CD14-positive monocyte (primary cell): ENCODE measurements at regions of chr12 and their contacts with region 1.

Region 1: GRCh38 chr12:11649703-11650521 is 438 bp downstream of the ETV6 start:
- DNase-seq: peak in 2 of 3 donors; percentile 37 to 45
- H3K4me3 ChIP-seq: peak overlapping the region; percentile 96 to 100 (median 96)
- H3K4me3 Mint-ChIP-seq: peak overlapping the region; percentile 95 to 98
- H3K27ac ChIP-seq: peak overlapping the region; percentile 96 to 97
- H3K27ac Mint-ChIP-seq: peak overlapping the region; percentile 95 to 99 (median 98)
- H3K4me1 ChIP-seq: peaks cover 38 to 45% of the 10 kb centered on the region in 2 donors
- H3K4me1 Mint-ChIP-seq: peaks cover 32% of the 10 kb centered on the region
- H3K27me3 ChIP-seq: no peaks in the 10 kb centered on the region
- H3K27me3 Mint-ChIP-seq: peaks cover 0 to 1% (median 0%) of the 10 kb centered on the region in 3 donors
- CTCF ChIP-seq: no peak

Region 2: GRCh38 chr12:11684393-11684792 is 34.5 kb after region 1 on chr12:
- intact Hi-C with region 1: loop called (anchors 2 to 5 kb)
- DNase-seq: peak; percentile 56 to 79 (median 78)
- H3K4me3 ChIP-seq: peak overlapping the region in 1 of 3 experiments; percentile 50
- H3K4me3 Mint-ChIP-seq: no peak overlapping the region
- H3K27ac ChIP-seq: peak overlapping the region; percentile 88 to 93
- H3K27ac Mint-ChIP-seq: peak overlapping the region; percentile 87 to 97 (median 95)
- H3K4me1 ChIP-seq: peaks cover 53 to 60% of the 10 kb centered on the region in 2 donors
- H3K4me1 Mint-ChIP-seq: peaks cover 85% of the 10 kb centered on the region
- H3K27me3 ChIP-seq: no peaks in the 10 kb centered on the region
- H3K27me3 Mint-ChIP-seq: peaks cover 0 to 2% (median 0%) of the 10 kb centered on the region in 3 donors
- CTCF ChIP-seq: no peak

Region 3: GRCh38 chr12:11707535-11707934 is 57.6 kb after region 1 on chr12:
- intact Hi-C with region 1: no loop called
- DNase-seq: no peak
- H3K4me3 ChIP-seq: no peak overlapping the region
- H3K4me3 Mint-ChIP-seq: no peak overlapping the region
- H3K27ac ChIP-seq: peak overlapping the region in 1 of 2 donors; percentile 67
- H3K27ac Mint-ChIP-seq: peak overlapping the region in 2 of 7 donors; percentile 48 to 77
- H3K4me1 ChIP-seq: peaks cover 42 to 43% of the 10 kb centered on the region in 2 donors
- H3K4me1 Mint-ChIP-seq: peaks cover 64% of the 10 kb centered on the region
- H3K27me3 ChIP-seq: no peaks in the 10 kb centered on the region
- H3K27me3 Mint-ChIP-seq: peaks cover 0 to 1% (median 0%) of the 10 kb centered on the region in 3 donors
- CTCF ChIP-seq: no peak

Region 4: DNA sequence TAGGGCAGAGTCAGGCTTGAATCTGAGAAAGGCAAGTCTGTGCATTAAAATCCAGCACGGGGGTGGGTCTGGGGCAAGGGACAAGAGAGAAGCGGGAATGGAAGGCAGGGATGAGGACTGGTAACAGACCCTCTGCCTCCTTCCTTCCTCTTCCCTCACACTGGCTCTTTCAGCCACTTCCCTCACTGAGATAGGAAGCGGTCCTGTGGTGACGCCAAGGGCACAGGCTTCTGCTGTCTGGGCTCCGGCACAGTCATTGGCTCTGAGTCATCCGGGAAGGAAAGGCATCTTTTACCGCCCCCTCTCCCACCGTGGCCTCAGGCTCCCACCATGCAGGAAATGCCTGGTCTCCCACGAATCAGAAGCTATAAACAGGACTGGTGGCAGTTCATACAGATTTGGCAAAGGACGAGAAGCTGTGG is 69.8 kb after region 1 on chr12:
- intact Hi-C with region 1: loop called in 1 of 2 experiments (anchors 10 kb)
- DNase-seq: peak; percentile 92 to 97 (median 96)
- H3K4me3 ChIP-seq: peak overlapping the region in 1 of 3 experiments; percentile 16
- H3K4me3 Mint-ChIP-seq: peak overlapping the region; percentile 42 to 69
- H3K27ac ChIP-seq: peak overlapping the region; percentile 52 to 89
- H3K27ac Mint-ChIP-seq: peak overlapping the region; percentile 86 to 95 (median 92)
- H3K4me1 ChIP-seq: peaks cover 41 to 44% of the 10 kb centered on the region in 2 donors
- H3K4me1 Mint-ChIP-seq: peaks cover 75% of the 10 kb centered on the region
- H3K27me3 ChIP-seq: no peaks in the 10 kb centered on the region
- H3K27me3 Mint-ChIP-seq: peaks cover 0 to under 1% (median 0%) of the 10 kb centered on the region in 3 donors
- CTCF ChIP-seq: no peak

Region 5: DNA sequence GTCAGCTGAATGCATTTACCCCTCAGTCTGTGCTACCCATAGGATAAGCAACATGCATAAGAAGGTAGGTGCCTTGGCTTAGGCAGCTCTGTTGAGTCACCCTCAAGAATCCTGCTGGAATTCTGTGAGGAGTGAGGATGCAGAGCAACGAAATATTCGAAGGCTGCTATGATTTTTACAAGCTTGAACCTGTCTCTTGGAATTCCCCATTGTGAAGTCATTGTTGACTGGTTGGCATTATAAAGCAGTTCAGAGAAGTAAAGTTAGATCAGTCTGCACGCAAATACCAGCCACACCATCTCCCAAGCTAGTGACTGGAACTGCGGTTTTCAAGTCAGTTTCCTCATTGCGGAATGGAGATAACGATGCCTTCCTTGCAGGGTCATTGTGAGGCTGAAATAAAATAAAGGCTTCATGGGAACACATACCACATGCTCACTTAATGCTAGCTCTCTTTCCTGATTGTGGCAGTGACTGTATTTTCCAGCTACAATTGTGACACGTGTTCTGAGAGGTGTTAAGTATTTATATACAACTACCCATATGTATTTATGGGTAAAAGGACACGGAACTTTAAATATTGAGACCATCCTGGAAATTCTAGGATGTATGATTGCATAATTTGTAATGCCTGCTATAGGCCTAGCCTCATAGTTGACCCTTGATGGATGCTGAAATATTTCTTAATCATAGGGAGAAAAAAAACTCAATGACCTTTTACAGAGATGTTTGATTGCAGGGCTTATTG is 96.3 kb after region 1 on chr12:
- intact Hi-C with region 1: loop called in 1 of 2 experiments (anchors 10 kb)
- DNase-seq: peak; percentile 95 to 99 (median 99)
- H3K4me3 ChIP-seq: no peak overlapping the region
- H3K4me3 Mint-ChIP-seq: peak overlapping the region; percentile 35 to 37
- H3K27ac ChIP-seq: peak overlapping the region; percentile 91 to 100
- H3K27ac Mint-ChIP-seq: peak overlapping the region; percentile 94 to 99 (median 97)
- H3K4me1 ChIP-seq: peaks cover 77 to 88% of the 10 kb centered on the region in 2 donors
- H3K4me1 Mint-ChIP-seq: peaks cover 90% of the 10 kb centered on the region
- H3K27me3 ChIP-seq: no peaks in the 10 kb centered on the region
- H3K27me3 Mint-ChIP-seq: no peaks in the 10 kb centered on the region
- CTCF ChIP-seq: no peak

Region 6: GRCh38 chr12:11765817-11766794 is 116.2 kb after region 1 on chr12:
- intact Hi-C with region 1: loop called in 1 of 2 experiments (anchors 5 kb)
- DNase-seq: peak; percentile 84 to 96 (median 95)
- H3K4me3 ChIP-seq: peak overlapping the region; percentile 11 to 57 (median 14)
- H3K4me3 Mint-ChIP-seq: peak overlapping the region; percentile 78 to 89
- H3K27ac ChIP-seq: peak overlapping the region; percentile 97
- H3K27ac Mint-ChIP-seq: peak overlapping the region; percentile 99 to 100 (median 99)
- H3K4me1 ChIP-seq: peaks cover 91 to 97% of the 10 kb centered on the region in 2 donors
- H3K4me1 Mint-ChIP-seq: peaks cover 96% of the 10 kb centered on the region
- H3K27me3 ChIP-seq: no peaks in the 10 kb centered on the region
- H3K27me3 Mint-ChIP-seq: no peaks in the 10 kb centered on the region
- CTCF ChIP-seq: no peak

Region 7: GRCh38 chr12:11812586-11813427 is 162.9 kb after region 1 on chr12:
- intact Hi-C with region 1: loop called in 1 of 2 experiments (anchors 5 kb)
- DNase-seq: peak; percentile 43 to 54 (median 52)
- H3K4me3 ChIP-seq: peak overlapping the region; percentile 1 to 62 (median 27)
- H3K4me3 Mint-ChIP-seq: peak overlapping the region; percentile 65 to 81
- H3K27ac ChIP-seq: peak overlapping the region; percentile 86 to 99
- H3K27ac Mint-ChIP-seq: peak overlapping the region; percentile 83 to 95 (median 92)
- H3K4me1 ChIP-seq: peaks cover 63 to 71% of the 10 kb centered on the region in 2 donors
- H3K4me1 Mint-ChIP-seq: peaks cover 71% of the 10 kb centered on the region
- H3K27me3 ChIP-seq: no peaks in the 10 kb centered on the region
- H3K27me3 Mint-ChIP-seq: peaks cover 0 to 1% (median 0%) of the 10 kb centered on the region in 3 donors
- CTCF ChIP-seq: peak; percentile 48

Region 8: DNA sequence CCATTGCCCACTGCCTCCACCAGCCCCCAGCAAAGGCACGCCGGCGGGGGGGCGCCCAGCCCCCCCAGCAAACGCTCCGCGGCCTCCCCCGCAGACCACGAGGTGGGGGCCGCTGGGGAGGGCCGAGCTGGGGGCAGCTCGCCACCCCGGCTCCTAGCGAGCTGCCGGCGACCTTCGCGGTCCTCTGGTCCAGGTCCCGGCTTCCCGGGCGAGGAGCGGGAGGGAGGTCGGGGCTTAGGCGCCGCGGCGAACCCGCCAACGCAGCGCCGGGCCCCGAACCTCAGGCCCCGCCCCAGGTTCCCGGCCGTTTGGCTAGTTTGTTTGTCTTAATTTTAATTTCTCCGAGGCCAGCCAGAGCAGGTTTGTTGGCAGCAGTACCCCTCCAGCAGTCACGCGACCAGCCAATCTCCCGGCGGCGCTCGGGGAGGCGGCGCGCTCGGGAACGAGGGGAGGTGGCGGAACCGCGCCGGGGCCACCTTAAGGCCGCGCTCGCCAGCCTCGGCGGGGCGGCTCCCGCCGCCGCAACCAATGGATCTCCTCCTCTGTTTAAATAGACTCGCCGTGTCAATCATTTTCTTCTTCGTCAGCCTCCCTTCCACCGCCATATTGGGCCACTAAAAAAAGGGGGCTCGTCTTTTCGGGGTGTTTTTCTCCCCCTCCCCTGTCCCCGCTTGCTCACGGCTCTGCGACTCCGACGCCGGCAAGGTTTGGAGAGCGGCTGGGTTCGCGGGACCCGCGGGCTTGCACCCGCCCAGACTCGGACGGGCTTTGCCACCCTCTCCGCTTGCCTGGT is 1067.1 kb after region 1 on chr12 and contains the start of gene CDKN1B:
- intact Hi-C with region 1: loop called in 1 of 2 experiments (anchors 5 kb)
- DNase-seq: peak; percentile 78 to 84 (median 84)
- H3K4me3 ChIP-seq: peak within 1 kb of the TSS; percentile 85 to 99 (median 92)
- H3K4me3 Mint-ChIP-seq: peak within 1 kb of the TSS; percentile 97 to 99
- H3K27ac ChIP-seq: peak within 1 kb of the TSS; percentile 96 to 97
- H3K27ac Mint-ChIP-seq: peak within 1 kb of the TSS; percentile 97 to 99 (median 98)
- H3K4me1 ChIP-seq: peaks cover 44 to 54% of the 10 kb centered on the region in 2 donors
- H3K4me1 Mint-ChIP-seq: peaks cover 53% of the 10 kb centered on the region
- H3K27me3 ChIP-seq: no peaks in the 10 kb centered on the region
- H3K27me3 Mint-ChIP-seq: peaks cover 0 to 1% (median 0%) of the 10 kb centered on the region in 3 donors
- CTCF ChIP-seq: no peak
- polyA plus RNA-seq, gene CDKN1B: 9.2 to 98.1 (median 9.5) TPM